ENCODE measurements at regions of chr1 and their contacts with region 1.

Region 1: GRCh38 chr1:117605774-117606648 is at the start of gene TENT5C:
- DNase-seq: peak; percentile 97
- H3K4me3 Mint-ChIP-seq: peak within 1 kb of the TSS; percentile 97
- H3K27ac Mint-ChIP-seq: peak within 1 kb of the TSS; percentile 81
- H3K4me1 Mint-ChIP-seq: peaks cover 42% of the 10 kb centered on the region
- H3K27me3 Mint-ChIP-seq: peaks cover 29% of the 10 kb centered on the region
- total RNA-seq, gene TENT5C: 11.2 and 11.6 TPM in 2 replicates

Region 2: GRCh38 chr1:117367047-117368018 is 238.7 kb before region 1 on chr1 and contains the start of gene MAN1A2:
- intact Hi-C with region 1: loop called (anchors 1 kb)
- DNase-seq: peak; percentile 77
- H3K4me3 Mint-ChIP-seq: peak within 1 kb of the TSS; percentile 90
- H3K27ac Mint-ChIP-seq: peak within 1 kb of the TSS; percentile 93
- H3K4me1 Mint-ChIP-seq: peaks cover 57% of the 10 kb centered on the region
- H3K27me3 Mint-ChIP-seq: no peaks in the 10 kb centered on the region
- total RNA-seq, gene MAN1A2: 26.0 and 27.1 TPM in 2 replicates

Region 3: DNA sequence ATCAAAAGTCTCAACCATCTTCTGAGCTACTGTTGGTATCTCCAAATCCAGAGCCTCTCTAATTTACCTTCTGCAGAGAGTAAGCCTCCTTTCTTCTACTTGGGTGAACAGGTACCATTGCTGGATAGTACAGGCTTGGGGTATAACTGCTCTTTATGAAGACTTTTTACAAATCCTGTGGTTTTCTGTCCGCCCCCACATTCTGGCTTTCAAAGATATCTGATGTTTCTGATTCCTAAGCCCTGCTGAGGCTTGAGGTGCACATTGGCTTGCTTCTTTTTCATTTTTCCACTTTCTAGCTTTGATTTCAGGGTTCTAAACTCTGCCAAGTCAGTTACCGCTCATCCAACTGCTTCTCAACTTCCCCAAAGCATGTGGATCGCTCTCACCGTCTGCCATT is 37.0 kb after region 1 on chr1:
- intact Hi-C with region 1: loop called (anchors 1 kb)
- DNase-seq: no peak
- H3K4me3 Mint-ChIP-seq: no peak overlapping the region
- H3K27ac Mint-ChIP-seq: no peak overlapping the region
- H3K4me1 Mint-ChIP-seq: peaks cover 8% of the 10 kb centered on the region
- H3K27me3 Mint-ChIP-seq: peaks cover 50% of the 10 kb centered on the region

Region 4: GRCh38 chr1:117664314-117664713 is 58.3 kb after region 1 on chr1:
- intact Hi-C with region 1: loop called (anchors 1 kb)
- DNase-seq: peak; percentile 67
- H3K4me3 Mint-ChIP-seq: no peak overlapping the region
- H3K27ac Mint-ChIP-seq: peak overlapping the region; percentile 83
- H3K4me1 Mint-ChIP-seq: peaks cover 67% of the 10 kb centered on the region
- H3K27me3 Mint-ChIP-seq: no peaks in the 10 kb centered on the region

Region 5: GRCh38 chr1:117895482-117896114 is 289.6 kb after region 1 on chr1:
- intact Hi-C with region 1: loop called (anchors 10 kb)
- DNase-seq: peak; percentile 27
- H3K4me3 Mint-ChIP-seq: no peak overlapping the region
- H3K27ac Mint-ChIP-seq: no peak overlapping the region
- H3K4me1 Mint-ChIP-seq: no peaks in the 10 kb centered on the region
- H3K27me3 Mint-ChIP-seq: no peaks in the 10 kb centered on the region

Measured in activated T-helper 2 cell treated with anti-CD3 and anti-CD28 coated beads, Interferon-gamma antibody, Interleukin-2, Interleukin-4, amounts not matched to agents 10 μg/mL and 5 μg/mL and 100 μg/mL, durations not matched to agents 14 hours and 24 hours and 36 hours (primary cell).